HCT116 (cell line): ENCODE measurements at regions of chr17 and their contacts with region 1.

Region 1: GRCh38 chr17:11986942-11987329 is 10.3 kb downstream of the ZNF18 start:
- DNase-seq: peak; percentile 32
- ATAC-seq: peak; percentile 77
- H3K4me3 ChIP-seq: no peak overlapping the region
- H3K27ac ChIP-seq: no peak overlapping the region
- H3K4me1 ChIP-seq: no peaks in the 10 kb centered on the region
- H3K27me3 ChIP-seq: no peaks in the 10 kb centered on the region
- CTCF ChIP-seq: peak; percentile 37 to 62 (median 42); a peak in 5 of 6 replicates
- POLR2A ChIP-seq: no peak
- RAD21 ChIP-seq: peak; percentile 61

Region 2: GRCh38 chr17:10737168-10737622 is 1249.7 kb before region 1 on chr17:
- CTCF ChIA-PET with region 1: no interaction called
- POLR2A ChIA-PET with region 1: no interaction called
- RAD21 ChIA-PET with region 1: no interaction called
- intact Hi-C with region 1: loop called (anchors 5 kb)
- DNase-seq: peak; percentile 39
- ATAC-seq: peak; percentile 94
- H3K4me3 ChIP-seq: no peak overlapping the region
- H3K27ac ChIP-seq: no peak overlapping the region
- H3K4me1 ChIP-seq: no peaks in the 10 kb centered on the region
- H3K27me3 ChIP-seq: peaks cover 11% of the 10 kb centered on the region; the same call in 1 of the 2 replicates
- CTCF ChIP-seq: peak; percentile 58 to 87 (median 74); a peak in 5 of 6 replicates
- POLR2A ChIP-seq: no peak
- RAD21 ChIP-seq: peak; percentile 77

Region 3: GRCh38 chr17:11969565-11969964 is 17.4 kb before region 1 on chr17:
- CTCF ChIA-PET with region 1: no interaction called
- POLR2A ChIA-PET with region 1: no interaction called
- RAD21 ChIA-PET with region 1: no interaction called
- intact Hi-C with region 1: no loop called
- DNase-seq: no peak
- ATAC-seq: no peak
- H3K4me3 ChIP-seq: no peak overlapping the region
- H3K27ac ChIP-seq: no peak overlapping the region
- H3K4me1 ChIP-seq: peaks cover 0 to 6% of the 10 kb centered on the region in 2 experiments; a peak in 1 of 4 replicates
- H3K27me3 ChIP-seq: no peaks in the 10 kb centered on the region
- CTCF ChIP-seq: no peak
- POLR2A ChIP-seq: no peak
- RAD21 ChIP-seq: no peak

Region 4: DNA sequence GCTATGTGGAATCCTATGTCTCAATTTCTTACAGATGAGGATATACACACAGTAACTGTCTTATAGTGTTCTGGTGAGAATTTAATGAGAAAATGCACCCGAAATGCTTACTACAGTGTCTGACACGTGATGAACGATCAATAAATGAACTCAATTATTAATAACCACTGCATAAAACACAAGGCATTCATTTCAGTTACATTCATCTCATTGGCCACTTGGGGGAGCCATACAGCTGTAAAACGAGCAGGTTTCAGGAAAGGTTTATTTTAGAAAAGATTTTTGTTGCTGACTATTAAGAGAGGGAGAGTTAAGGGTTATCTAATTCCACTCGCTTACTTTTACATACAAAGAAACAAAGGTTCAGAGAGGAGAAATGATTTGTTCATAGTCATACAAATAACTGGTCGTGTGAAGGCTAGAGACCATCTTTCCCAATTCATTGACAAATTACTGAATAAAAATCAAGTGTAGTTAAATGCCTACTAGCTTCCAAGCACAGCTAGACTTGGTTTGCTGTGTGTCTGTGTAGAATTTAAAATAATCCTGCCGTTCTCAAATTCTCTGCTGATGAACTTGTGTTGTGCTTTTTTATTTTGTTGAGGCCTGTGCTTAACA is 193.8 kb after region 1 on chr17:
- CTCF ChIA-PET with region 1: no interaction called
- POLR2A ChIA-PET with region 1: no interaction called
- RAD21 ChIA-PET with region 1: no interaction called
- intact Hi-C with region 1: no loop called
- DNase-seq: peak; percentile 47
- ATAC-seq: peak; percentile 79
- H3K4me3 ChIP-seq: no peak overlapping the region
- H3K27ac ChIP-seq: no peak overlapping the region
- H3K4me1 ChIP-seq: no peaks in the 10 kb centered on the region
- H3K27me3 ChIP-seq: no peaks in the 10 kb centered on the region
- CTCF ChIP-seq: peak; percentile 51 to 89 (median 70); a peak in 5 of 6 replicates
- POLR2A ChIP-seq: no peak
- RAD21 ChIP-seq: peak; percentile 71

Region 5: DNA sequence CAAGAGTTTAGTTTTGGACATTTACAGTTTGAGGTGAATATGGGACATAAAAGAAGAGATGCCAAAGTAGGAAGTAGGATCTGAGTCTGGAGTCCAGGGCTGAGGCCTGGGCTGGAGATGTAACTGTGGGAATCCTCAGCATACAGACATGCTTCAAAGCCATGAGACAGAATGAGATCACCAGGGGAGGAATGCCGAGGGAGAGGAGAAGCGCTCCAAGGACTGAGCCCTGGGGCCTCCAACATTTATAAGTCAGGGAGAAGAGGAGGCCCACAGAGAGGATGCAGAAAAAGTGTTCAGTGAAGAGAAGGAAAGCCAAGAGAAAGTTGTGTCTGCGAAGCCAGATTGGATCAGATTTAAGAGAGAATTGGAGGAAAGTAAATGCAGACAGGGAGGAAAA is 401.3 kb after region 1 on chr17:
- CTCF ChIA-PET with region 1: no interaction called
- POLR2A ChIA-PET with region 1: no interaction called
- RAD21 ChIA-PET with region 1: no interaction called
- intact Hi-C with region 1: no loop called
- DNase-seq: no peak
- ATAC-seq: no peak
- H3K4me3 ChIP-seq: no peak overlapping the region
- H3K27ac ChIP-seq: no peak overlapping the region
- H3K4me1 ChIP-seq: no peaks in the 10 kb centered on the region
- H3K27me3 ChIP-seq: peaks cover 14% of the 10 kb centered on the region; the same call in 1 of the 2 replicates
- CTCF ChIP-seq: no peak
- POLR2A ChIP-seq: no peak
- RAD21 ChIP-seq: no peak